Activated CD8-positive, alpha-beta memory T cell treated with anti-CD3 and anti-CD28 coated beads, Interleukin-2, amount 10 ng/mL, durations not matched to agents 7 days and 5 days (primary cell): ENCODE measurements at regions of chr5 and their contacts with region 1.

Region 1: GRCh38 chr5:100903039-100903887 is at the start of gene ST8SIA4:
- DNase-seq: peak; percentile 98
- ATAC-seq: peak; percentile 76
- H3K4me3 Mint-ChIP-seq: peak within 1 kb of the TSS; percentile 84
- H3K27ac Mint-ChIP-seq: peak within 1 kb of the TSS; percentile 94
- H3K4me1 Mint-ChIP-seq: peaks cover 31% of the 10 kb centered on the region
- H3K27me3 Mint-ChIP-seq: no peaks in the 10 kb centered on the region
- total RNA-seq, gene ST8SIA4: 53.3 to 59.3 TPM

Region 2: DNA sequence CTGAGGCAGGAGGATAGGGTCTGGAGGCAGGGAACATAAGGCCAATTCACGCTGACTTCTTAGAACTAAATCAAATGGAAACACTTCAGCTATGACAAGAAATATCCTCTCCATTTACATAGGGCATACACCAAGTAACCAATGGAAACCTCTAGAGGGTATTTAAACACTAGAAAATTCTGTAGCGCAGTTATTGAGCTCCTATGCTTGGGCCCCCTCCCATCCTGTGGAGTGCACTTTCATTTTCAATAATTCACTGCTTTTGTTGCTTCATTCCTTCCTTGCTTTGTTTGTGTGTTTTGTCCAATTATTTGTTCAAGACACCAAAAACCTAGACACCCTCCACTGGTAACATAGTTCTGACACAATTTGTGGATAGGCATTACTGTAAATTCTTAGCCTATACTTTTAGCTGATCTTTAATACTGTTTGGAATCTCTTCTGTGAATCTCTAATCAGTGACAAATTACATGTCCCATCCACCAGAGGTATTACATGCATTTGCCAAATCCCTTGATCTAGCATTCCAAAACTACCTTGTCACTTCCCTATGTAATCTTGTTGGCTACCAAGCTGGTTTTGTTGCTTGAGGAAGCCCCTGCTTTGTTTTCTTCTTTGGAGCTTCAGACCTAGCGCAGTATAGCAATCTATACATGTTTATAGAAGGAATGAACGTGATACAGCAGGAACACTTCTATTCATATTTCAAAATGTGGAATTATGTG is 61.7 kb before region 1 on chr5:
- CTCF ChIA-PET with region 1: interaction called, 13 read pairs
- DNase-seq: peak; percentile 48
- ATAC-seq: peak; percentile 52
- H3K4me3 Mint-ChIP-seq: peak overlapping the region; percentile 69
- H3K27ac Mint-ChIP-seq: peak overlapping the region; percentile 94
- H3K4me1 Mint-ChIP-seq: peaks cover 69% of the 10 kb centered on the region
- H3K27me3 Mint-ChIP-seq: no peaks in the 10 kb centered on the region

Region 3: DNA sequence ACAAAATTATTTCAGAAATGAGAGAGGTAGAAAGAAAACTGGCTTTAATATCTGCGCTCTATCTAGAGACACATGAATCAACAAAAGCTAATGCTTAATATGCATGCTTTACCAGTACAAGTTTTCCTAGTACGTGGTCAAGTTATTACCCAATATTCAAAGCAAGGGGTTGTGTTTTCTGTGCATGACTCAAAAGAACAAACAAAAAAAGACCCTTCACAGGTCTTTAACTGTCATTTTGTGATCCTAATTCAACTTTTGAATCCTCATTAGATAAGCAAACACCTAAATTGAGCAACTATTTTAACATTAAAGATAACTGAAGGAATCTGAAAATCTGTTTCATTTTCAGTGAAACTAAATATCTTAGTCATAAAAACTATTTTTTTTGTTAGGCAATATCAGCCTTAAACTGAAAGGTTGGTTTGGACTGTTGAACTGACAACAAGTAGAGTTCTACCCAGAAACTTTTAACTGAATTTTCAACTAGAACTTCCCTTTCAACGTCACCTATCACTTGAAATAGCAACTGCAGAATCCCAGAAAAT is 12.7 kb before region 1 on chr5:
- CTCF ChIA-PET with region 1: interaction called, 34 read pairs
- DNase-seq: no peak
- ATAC-seq: peak; percentile 74
- H3K4me3 Mint-ChIP-seq: peak overlapping the region; percentile 70
- H3K27ac Mint-ChIP-seq: peak overlapping the region; percentile 95
- H3K4me1 Mint-ChIP-seq: peaks cover 60% of the 10 kb centered on the region
- H3K27me3 Mint-ChIP-seq: no peaks in the 10 kb centered on the region